ENCODE measurements at regions of chr17 and their contacts with region 1.

Region 1: GRCh38 chr17:64920026-64920418 is 744 bp upstream of the LRRC37A3 start:
- DNase-seq: peak in 1 of 2 experiments; percentile 35
- ATAC-seq: peak in 1 of 2 experiments; percentile 49; a peak in 3 of 6 replicates
- H3K4me3 ChIP-seq: peak overlapping the region; percentile 52
- H3K27ac ChIP-seq: peak overlapping the region; percentile 86 to 91
- H3K4me1 ChIP-seq: peaks cover 8% of the 10 kb centered on the region; the same call in 1 of the 3 replicates
- CTCF ChIP-seq: no peak
- EP300 ChIP-seq: no peak
- POLR2A ChIP-seq: no peak
- RAD21 ChIP-seq: no peak

Region 2: GRCh38 chr17:64938925-64939474 is 19.0 kb after region 1 on chr17:
- CTCF ChIA-PET with region 1: interaction called, 21 read pairs
- POLR2A ChIA-PET with region 1: interaction called, 3 read pairs
- DNase-seq: peak; percentile 54 to 66
- ATAC-seq: peak; percentile 84 to 95
- H3K4me3 ChIP-seq: no peak overlapping the region
- H3K27ac ChIP-seq: 0 out of 6 replicates have a peak overlapping the region, but pooled peaks of 1 of the 2 experiments have one; percentile 9
- H3K4me1 ChIP-seq: peaks cover 13% of the 10 kb centered on the region
- CTCF ChIP-seq: peak; percentile 62
- EP300 ChIP-seq: no peak
- POLR2A ChIP-seq: no peak
- RAD21 ChIP-seq: peak; percentile 68 to 75

Region 3: DNA sequence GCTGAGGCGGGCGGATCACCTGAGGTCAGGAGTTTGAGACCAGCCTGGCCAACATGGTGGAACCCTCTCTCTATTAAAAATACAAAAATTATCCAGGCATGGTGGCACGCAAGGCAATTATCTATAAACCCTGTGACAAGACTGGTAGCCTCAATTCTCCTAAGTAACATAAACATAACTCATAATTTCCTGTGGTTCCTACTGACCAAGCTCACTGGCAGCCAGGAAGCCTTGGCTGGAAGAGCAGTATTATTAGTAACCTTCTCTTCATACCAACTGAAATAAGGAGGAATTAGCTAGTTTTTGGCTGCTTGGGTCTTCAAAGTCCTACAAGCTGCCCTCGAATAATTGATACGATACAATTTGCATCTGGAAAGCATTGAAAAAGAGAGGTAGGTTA is 30.8 kb after region 1 on chr17:
- CTCF ChIA-PET with region 1: interaction called, 16 read pairs
- POLR2A ChIA-PET with region 1: no interaction called
- DNase-seq: no peak
- ATAC-seq: no peak
- H3K4me3 ChIP-seq: no peak overlapping the region
- H3K27ac ChIP-seq: no peak overlapping the region
- H3K4me1 ChIP-seq: no peaks in the 10 kb centered on the region
- CTCF ChIP-seq: no peak
- EP300 ChIP-seq: no peak
- POLR2A ChIP-seq: no peak
- RAD21 ChIP-seq: no peak

Region 4: GRCh38 chr17:64968652-64969501 is 48.9 kb after region 1 on chr17:
- CTCF ChIA-PET with region 1: interaction called, 34 read pairs
- POLR2A ChIA-PET with region 1: interaction called, 7 read pairs
- DNase-seq: no peak
- ATAC-seq: no peak
- H3K4me3 ChIP-seq: no peak overlapping the region
- H3K27ac ChIP-seq: no peak overlapping the region
- H3K4me1 ChIP-seq: peaks cover 18% of the 10 kb centered on the region
- CTCF ChIP-seq: no peak
- EP300 ChIP-seq: no peak
- POLR2A ChIP-seq: no peak
- RAD21 ChIP-seq: no peak

Region 5: GRCh38 chr17:65092262-65092661 is 172.2 kb after region 1 on chr17:
- CTCF ChIA-PET with region 1: no interaction called
- POLR2A ChIA-PET with region 1: no interaction called
- DNase-seq: peak; percentile 55 to 64
- ATAC-seq: peak; percentile 39 to 63; a peak in 5 of 6 replicates
- H3K4me3 ChIP-seq: no peak overlapping the region
- H3K27ac ChIP-seq: peak overlapping the region; percentile 9 to 60; a peak in 4 of 6 replicates
- H3K4me1 ChIP-seq: peaks cover 33% of the 10 kb centered on the region
- CTCF ChIP-seq: no peak
- EP300 ChIP-seq: no peak
- POLR2A ChIP-seq: no peak
- RAD21 ChIP-seq: no peak

Region 6: GRCh38 chr17:65294179-65294720 is 374.2 kb after region 1 on chr17:
- CTCF ChIA-PET with region 1: no interaction called
- POLR2A ChIA-PET with region 1: no interaction called
- DNase-seq: peak; percentile 77 to 89
- ATAC-seq: peak; percentile 96 to 99
- H3K4me3 ChIP-seq: no peak overlapping the region
- H3K27ac ChIP-seq: no peak overlapping the region
- H3K4me1 ChIP-seq: no peaks in the 10 kb centered on the region
- CTCF ChIP-seq: peak; percentile 86
- EP300 ChIP-seq: no peak
- POLR2A ChIP-seq: no peak
- RAD21 ChIP-seq: peak; percentile 93 to 94

Measured in A549 (cell line).